ENCODE measurements at regions of chr16 and their contacts with region 1.

Region 1: GRCh38 chr16:81261049-81261648 is 22.7 kb downstream of the BCO1 start:
- DNase-seq: peak; percentile 34
- H3K4me3 Mint-ChIP-seq: no peak overlapping the region
- H3K27ac Mint-ChIP-seq: no peak overlapping the region
- H3K4me1 Mint-ChIP-seq: peaks cover 13% of the 10 kb centered on the region
- H3K27me3 Mint-ChIP-seq: no peaks in the 10 kb centered on the region
- CTCF ChIP-seq: peak; percentile 61

Region 2: DNA sequence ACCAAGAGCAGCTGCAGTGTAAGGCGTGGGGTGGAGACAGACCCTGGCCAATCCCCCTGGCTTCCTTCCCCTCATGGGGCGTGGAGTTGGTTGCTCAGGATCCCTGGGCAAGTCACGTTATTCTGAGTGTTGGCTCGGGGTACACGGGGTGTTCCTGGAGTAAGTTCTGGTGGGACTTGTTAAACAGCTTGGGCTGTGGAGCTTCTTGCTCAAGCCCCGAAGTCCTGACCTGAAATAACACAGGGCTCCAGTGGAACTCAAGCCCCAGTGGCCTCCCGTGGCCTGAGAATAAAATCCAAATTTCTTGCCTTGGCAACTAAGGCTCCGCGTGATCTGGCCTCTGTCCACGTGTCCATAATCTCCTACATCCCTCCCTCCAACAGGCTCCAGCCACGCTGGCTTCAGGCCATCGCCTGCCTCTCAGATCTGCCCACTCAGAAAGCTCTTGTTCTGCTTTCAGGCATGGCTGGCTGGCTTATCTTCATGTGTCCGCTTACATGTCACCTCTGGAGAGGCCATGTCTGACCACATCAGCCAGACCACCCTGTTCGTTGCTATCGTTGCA is 72.0 kb before region 1 on chr16:
- CTCF ChIA-PET with region 1: no interaction called
- POLR2A ChIA-PET with region 1: no interaction called
- intact Hi-C with region 1: no loop called
- DNase-seq: no peak
- H3K4me3 Mint-ChIP-seq: no peak overlapping the region
- H3K27ac Mint-ChIP-seq: no peak overlapping the region
- H3K4me1 Mint-ChIP-seq: no peaks in the 10 kb centered on the region
- H3K27me3 Mint-ChIP-seq: no peaks in the 10 kb centered on the region
- CTCF ChIP-seq: no peak

Region 3: GRCh38 chr16:81238296-81239011 is 22.7 kb before region 1 on chr16 and contains the start of gene BCO1:
- CTCF ChIA-PET with region 1: interaction called, 15 read pairs
- POLR2A ChIA-PET with region 1: interaction called, 3 read pairs
- intact Hi-C with region 1: no loop called
- DNase-seq: peak; percentile 25
- H3K4me3 Mint-ChIP-seq: peak within 1 kb of the TSS; percentile 67
- H3K27ac Mint-ChIP-seq: peak within 1 kb of the TSS; percentile 86
- H3K4me1 Mint-ChIP-seq: peaks cover 14% of the 10 kb centered on the region
- H3K27me3 Mint-ChIP-seq: no peaks in the 10 kb centered on the region
- CTCF ChIP-seq: no peak
- total RNA-seq, gene BCO1: not detected in 2 replicates

Region 4: GRCh38 chr16:81243942-81244341 is 17.2 kb before region 1 on chr16:
- CTCF ChIA-PET with region 1: interaction called, 15 read pairs
- POLR2A ChIA-PET with region 1: interaction called, 4 read pairs
- intact Hi-C with region 1: no loop called
- DNase-seq: no peak
- H3K4me3 Mint-ChIP-seq: no peak overlapping the region
- H3K27ac Mint-ChIP-seq: no peak overlapping the region
- H3K4me1 Mint-ChIP-seq: peaks cover 6% of the 10 kb centered on the region
- H3K27me3 Mint-ChIP-seq: peaks cover 15% of the 10 kb centered on the region
- CTCF ChIP-seq: no peak

Measured in MCF 10A (cell line).